ENCODE measurements at regions of chr2 and their contacts with region 1.

Region 1: DNA sequence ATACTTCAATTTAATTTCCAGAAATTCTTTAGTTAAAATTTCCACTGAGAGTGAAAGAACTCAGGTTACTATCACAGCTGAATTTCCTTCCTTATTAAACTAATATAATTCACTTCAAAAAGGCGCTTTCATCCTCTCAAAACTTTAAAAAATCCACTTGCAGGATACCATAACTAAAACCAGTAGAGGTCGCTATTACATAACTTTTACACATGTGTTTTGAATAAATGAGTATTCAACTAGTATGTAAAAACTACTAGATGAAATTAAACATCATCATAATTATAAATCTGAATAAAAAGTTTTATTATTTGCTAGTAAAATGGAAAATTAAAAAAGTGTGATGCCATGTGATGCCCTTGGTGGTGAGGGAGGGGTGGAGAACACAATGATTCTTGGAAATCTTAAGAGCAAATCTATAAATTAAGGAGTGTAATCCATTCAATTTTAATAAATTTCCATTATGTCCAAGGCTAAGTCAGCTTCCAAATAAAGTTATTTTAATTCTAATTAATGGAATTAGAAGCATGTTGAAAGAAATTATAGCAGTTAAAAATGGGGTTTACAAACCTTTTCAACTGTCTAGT is 61.4 kb downstream of the SOS1 start:
- DNase-seq: no peak
- H3K4me3 ChIP-seq: no peak overlapping the region
- H3K27ac ChIP-seq: no peak overlapping the region
- H3K4me1 ChIP-seq: no peaks in the 10 kb centered on the region
- H3K27me3 ChIP-seq: no peaks in the 10 kb centered on the region
- CTCF ChIP-seq: peak; percentile 79

Region 2: DNA sequence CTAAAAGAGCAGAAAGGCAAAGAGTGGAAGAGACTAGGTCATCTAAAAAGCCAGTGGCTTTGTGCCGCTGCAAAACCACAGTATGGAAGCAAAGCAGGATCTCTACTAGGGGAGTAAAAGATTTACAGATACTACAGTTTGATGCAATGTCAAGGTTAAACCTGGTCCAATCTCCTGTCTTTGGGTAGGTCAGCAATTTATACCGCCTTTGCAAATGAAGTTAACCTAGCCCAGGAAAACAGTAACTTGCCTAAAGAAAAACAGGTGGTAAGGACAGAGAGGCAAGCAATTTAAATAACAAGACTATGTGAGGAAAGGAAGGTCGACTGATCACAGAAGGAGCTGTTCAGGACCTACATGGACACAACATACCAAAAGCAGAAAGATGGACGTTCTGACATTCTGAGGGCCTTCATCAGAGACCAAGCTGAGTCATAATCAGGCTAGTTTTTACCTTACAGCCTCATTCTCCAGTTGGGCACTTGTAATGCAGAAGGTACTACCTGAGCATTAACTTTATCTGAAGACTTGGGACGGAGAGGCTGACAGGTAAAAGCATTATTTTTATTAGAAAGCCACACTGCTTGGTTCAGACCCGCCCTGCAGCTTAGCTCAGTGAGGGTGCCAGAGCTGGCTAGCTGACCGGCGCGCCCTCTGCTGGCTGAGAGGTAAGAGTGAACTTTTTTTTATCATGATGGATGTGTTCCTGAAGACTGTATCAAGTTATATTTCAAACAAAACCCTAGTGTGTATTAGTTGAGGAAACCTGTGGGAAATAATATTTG is 168.4 kb after region 1 on chr2:
- intact Hi-C with region 1: loop called (anchors 2 kb)
- DNase-seq: peak; percentile 80
- H3K4me3 ChIP-seq: peak overlapping the region; percentile 48
- H3K27ac ChIP-seq: no peak overlapping the region
- H3K4me1 ChIP-seq: peaks cover 25% of the 10 kb centered on the region
- H3K27me3 ChIP-seq: no peaks in the 10 kb centered on the region
- CTCF ChIP-seq: peak; percentile 90

Region 3: GRCh38 chr2:39289609-39290008 is 230.2 kb after region 1 on chr2:
- intact Hi-C with region 1: no loop called
- DNase-seq: no peak
- H3K4me3 ChIP-seq: no peak overlapping the region
- H3K27ac ChIP-seq: no peak overlapping the region
- H3K4me1 ChIP-seq: no peaks in the 10 kb centered on the region
- H3K27me3 ChIP-seq: no peaks in the 10 kb centered on the region
- CTCF ChIP-seq: no peak